Activated naive CD4-positive, alpha-beta T cell treated with anti-CD3 and anti-CD28 coated beads for 36 hours (primary cell): ENCODE measurements at regions of chr10 and their contacts with region 1.

Region 1: DNA sequence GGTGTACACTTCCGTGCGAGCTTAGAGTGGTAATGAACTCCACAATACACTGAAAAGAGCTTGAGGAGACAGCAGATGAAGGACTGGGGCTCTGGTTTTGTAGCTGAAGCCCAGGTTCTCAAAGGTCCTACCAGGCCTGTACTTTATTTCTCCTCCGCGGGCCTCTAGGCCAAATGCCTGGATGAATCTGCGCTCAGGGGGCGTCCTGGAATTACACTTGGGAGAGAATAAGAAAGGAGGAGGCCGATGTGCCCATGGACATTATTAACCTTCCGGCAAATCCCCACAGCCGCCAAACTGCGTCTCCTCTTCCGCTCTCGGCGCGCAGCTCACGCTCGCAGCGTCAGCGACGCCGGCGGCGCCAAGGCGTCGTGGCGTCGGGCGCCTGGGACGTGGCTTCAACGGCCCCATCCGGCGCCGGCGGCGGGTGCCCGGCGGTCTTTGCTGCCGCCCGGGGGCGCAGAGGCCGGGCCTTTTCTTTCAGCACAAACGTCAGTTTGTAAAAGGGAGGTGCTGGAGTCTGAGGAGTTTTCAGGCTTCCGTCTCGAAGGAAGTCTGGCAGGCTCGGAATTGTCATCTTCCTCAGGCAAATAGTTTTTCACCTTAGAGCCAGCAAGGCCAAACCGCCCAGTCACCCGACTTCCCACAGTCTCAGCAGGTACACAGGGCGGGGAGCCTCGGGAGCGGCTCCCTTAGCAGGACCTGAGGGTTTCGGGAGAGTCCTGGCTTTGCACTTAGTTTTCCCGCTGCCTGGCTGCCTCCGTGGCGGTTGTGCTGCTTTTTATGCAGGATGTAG is at the start of gene CCDC7:
- DNase-seq: peak; percentile 85
- H3K4me3 Mint-ChIP-seq: peak within 1 kb of the TSS; percentile 94
- H3K27ac Mint-ChIP-seq: peak within 1 kb of the TSS; percentile 98
- H3K4me1 Mint-ChIP-seq: peaks cover 14% of the 10 kb centered on the region
- H3K27me3 Mint-ChIP-seq: no peaks in the 10 kb centered on the region
- total RNA-seq, gene CCDC7: 6.8 to 8.9 TPM

Region 2: GRCh38 chr10:32033171-32033570 is 412.8 kb before region 1 on chr10:
- CTCF ChIA-PET with region 1: no interaction called
- intact Hi-C with region 1: no loop called
- DNase-seq: no peak
- H3K4me3 Mint-ChIP-seq: no peak overlapping the region
- H3K27ac Mint-ChIP-seq: no peak overlapping the region
- H3K4me1 Mint-ChIP-seq: peaks cover 7% of the 10 kb centered on the region
- H3K27me3 Mint-ChIP-seq: no peaks in the 10 kb centered on the region

Region 3: GRCh38 chr10:32055813-32056600 is 389.9 kb before region 1 on chr10 and contains the start of gene KIF5B:
- CTCF ChIA-PET with region 1: no interaction called
- intact Hi-C with region 1: loop called (anchors 2 kb)
- DNase-seq: peak; percentile 84
- H3K4me3 Mint-ChIP-seq: peak within 1 kb of the TSS; percentile 96
- H3K27ac Mint-ChIP-seq: peak within 1 kb of the TSS; percentile 92
- H3K4me1 Mint-ChIP-seq: peaks cover 39% of the 10 kb centered on the region
- H3K27me3 Mint-ChIP-seq: no peaks in the 10 kb centered on the region
- total RNA-seq, gene KIF5B: 64.9 to 67.8 TPM

Region 4: GRCh38 chr10:32190890-32191491 is 254.9 kb before region 1 on chr10:
- CTCF ChIA-PET with region 1: no interaction called
- intact Hi-C with region 1: loop called (anchors 5 kb)
- DNase-seq: no peak
- H3K4me3 Mint-ChIP-seq: no peak overlapping the region
- H3K27ac Mint-ChIP-seq: no peak overlapping the region
- H3K4me1 Mint-ChIP-seq: peaks cover 2% of the 10 kb centered on the region
- H3K27me3 Mint-ChIP-seq: no peaks in the 10 kb centered on the region

Region 5: DNA sequence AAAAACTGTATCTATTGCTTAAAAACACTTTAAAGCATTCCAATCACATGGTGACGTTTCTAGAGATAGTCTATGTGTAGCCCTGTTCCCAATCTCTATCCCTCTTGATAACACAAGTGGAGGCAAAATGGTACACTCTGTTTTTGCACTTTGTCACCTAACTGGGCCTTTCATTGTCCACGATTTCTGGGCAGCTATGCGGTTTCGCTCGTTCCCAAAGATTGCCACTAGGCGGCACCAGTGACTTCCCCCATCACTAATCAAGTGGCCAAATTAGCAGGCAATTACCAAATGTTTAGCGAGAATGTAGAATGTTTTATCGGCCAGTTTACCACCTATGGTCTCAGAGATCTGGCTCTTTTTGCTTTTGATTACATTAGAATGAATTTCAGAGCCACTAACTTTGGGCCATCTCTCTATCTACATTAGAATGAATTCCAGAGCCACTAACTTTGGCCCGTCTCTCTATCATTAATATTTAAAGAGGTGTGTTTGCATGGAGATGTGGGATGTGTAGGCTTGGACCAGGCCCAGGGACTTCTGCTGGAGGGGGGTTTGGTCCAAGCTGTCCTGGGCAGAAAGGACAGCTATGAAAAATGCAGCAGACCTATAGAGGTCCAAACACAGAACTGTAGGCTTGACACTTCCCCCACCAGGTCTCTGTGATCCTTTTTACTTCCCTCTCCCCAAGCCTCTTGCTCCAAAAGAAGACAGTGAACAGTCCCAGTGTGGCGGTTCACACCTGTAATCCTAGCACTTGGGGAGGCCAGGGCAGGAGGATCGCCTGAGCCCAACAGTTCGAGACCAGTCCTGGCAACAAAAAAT is 189.1 kb before region 1 on chr10:
- CTCF ChIA-PET with region 1: no interaction called
- intact Hi-C with region 1: loop called (anchors 1 kb)
- DNase-seq: peak; percentile 81
- H3K4me3 Mint-ChIP-seq: no peak overlapping the region
- H3K27ac Mint-ChIP-seq: no peak overlapping the region
- H3K4me1 Mint-ChIP-seq: peaks cover 8% of the 10 kb centered on the region
- H3K27me3 Mint-ChIP-seq: no peaks in the 10 kb centered on the region

Region 6: GRCh38 chr10:32378363-32379317 is 67.3 kb before region 1 on chr10:
- CTCF ChIA-PET with region 1: interaction called, 6 read pairs
- intact Hi-C with region 1: loop called (anchors 1 kb)
- DNase-seq: peak; percentile 97
- H3K4me3 Mint-ChIP-seq: no peak overlapping the region
- H3K27ac Mint-ChIP-seq: no peak overlapping the region
- H3K4me1 Mint-ChIP-seq: peaks cover 13% of the 10 kb centered on the region
- H3K27me3 Mint-ChIP-seq: no peaks in the 10 kb centered on the region

Region 7: DNA sequence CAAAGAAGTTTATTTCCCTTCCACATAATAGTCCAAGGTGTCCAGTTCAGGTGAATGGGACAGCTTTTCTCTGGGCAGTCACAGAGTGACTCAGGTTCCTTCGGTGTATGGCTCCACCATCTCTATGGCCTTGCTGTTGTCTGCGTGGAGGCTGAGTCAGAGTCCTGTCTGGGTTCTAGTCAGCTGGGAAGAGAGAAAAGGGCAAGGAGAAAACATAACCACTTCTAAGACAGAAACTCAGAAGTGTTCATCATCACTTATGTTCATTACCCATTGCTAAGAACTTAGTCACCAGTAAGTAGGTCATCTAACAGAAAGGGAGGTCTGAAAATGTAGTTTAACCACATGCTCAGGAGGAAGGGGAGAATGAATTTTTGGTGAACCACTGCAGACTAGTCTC is 32.4 kb before region 1 on chr10:
- CTCF ChIA-PET with region 1: no interaction called
- intact Hi-C with region 1: loop called (anchors 1 kb)
- DNase-seq: peak; percentile 65
- H3K4me3 Mint-ChIP-seq: no peak overlapping the region
- H3K27ac Mint-ChIP-seq: no peak overlapping the region
- H3K4me1 Mint-ChIP-seq: peaks cover 9% of the 10 kb centered on the region
- H3K27me3 Mint-ChIP-seq: no peaks in the 10 kb centered on the region